Testis (tissue), 5 donors: ENCODE measurements at regions of chr5 and their contacts with region 1.

Region 1: GRCh38 chr5:174045470-174046025 is at the start of gene NSG2:
- DNase-seq: peak; percentile 95
- H3K4me3 ChIP-seq: no peak within 1 kb of the TSS
- H3K27ac ChIP-seq: no peak within 1 kb of the TSS
- H3K4me1 ChIP-seq: no peaks in the 10 kb centered on the region
- H3K27me3 ChIP-seq: no peaks in the 10 kb centered on the region
- CTCF ChIP-seq: peak; percentile 68 to 87 (median 75)
- POLR2A ChIP-seq: no peak
- total RNA-seq, gene NSG2: 7.2 to 11.3 TPM

Region 2: GRCh38 chr5:173778784-173779304 is 266.7 kb before region 1 on chr5:
- intact Hi-C with region 1: no loop called
- DNase-seq: no peak
- H3K4me3 ChIP-seq: no peak overlapping the region
- H3K27ac ChIP-seq: no peak overlapping the region
- H3K4me1 ChIP-seq: peaks cover 6% of the 10 kb centered on the region
- H3K27me3 ChIP-seq: no peaks in the 10 kb centered on the region
- CTCF ChIP-seq: no peak
- POLR2A ChIP-seq: no peak

Region 3: GRCh38 chr5:174311531-174312269 is 266.2 kb after region 1 on chr5:
- intact Hi-C with region 1: loop called (anchors 5 kb)
- DNase-seq: peak; percentile 87
- H3K4me3 ChIP-seq: peak overlapping the region; percentile 34 to 51
- H3K27ac ChIP-seq: peak overlapping the region in 1 of 2 donors; percentile 29
- H3K4me1 ChIP-seq: peaks cover 7% of the 10 kb centered on the region
- H3K27me3 ChIP-seq: no peaks in the 10 kb centered on the region
- CTCF ChIP-seq: peak; percentile 90 to 94 (median 91)
- POLR2A ChIP-seq: no peak